WTC11 (cell line): ENCODE measurements at regions of chr17 and their contacts with region 1.

Region 1: DNA sequence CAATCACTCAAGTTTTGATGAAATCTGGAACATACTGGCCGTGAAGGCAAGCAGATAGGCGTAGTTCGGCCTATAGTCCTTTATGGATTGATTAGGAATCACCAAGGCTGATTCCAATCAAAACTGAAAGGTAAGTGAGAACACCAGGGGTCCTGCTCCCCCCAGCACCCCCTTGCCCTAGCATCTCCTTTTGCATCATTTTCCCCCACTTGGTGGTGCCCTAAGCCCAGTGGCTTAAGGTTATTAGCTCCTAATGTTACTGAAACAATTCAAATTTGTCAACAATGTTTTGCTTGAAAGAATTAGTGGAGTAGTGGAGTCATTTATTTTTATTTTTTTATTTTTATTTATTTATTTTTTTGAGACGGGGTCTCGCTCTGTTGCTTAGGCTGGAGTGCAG is 4.9 kb downstream of the SLFN14 start:
- DNase-seq: no peak
- ATAC-seq: no peak
- H3K4me3 Mint-ChIP-seq: no peak overlapping the region
- H3K27ac Mint-ChIP-seq: no peak overlapping the region
- H3K4me1 Mint-ChIP-seq: peaks cover 11% of the 10 kb centered on the region
- H3K27me3 Mint-ChIP-seq: peaks cover 19% of the 10 kb centered on the region
- CTCF ChIP-seq: no peak

Region 2: GRCh38 chr17:35359398-35359797 is 196.3 kb before region 1 on chr17:
- CTCF ChIA-PET with region 1: no interaction called
- POLR2A ChIA-PET with region 1: no interaction called
- DNase-seq: no peak
- ATAC-seq: no peak
- H3K4me3 Mint-ChIP-seq: no peak overlapping the region
- H3K27ac Mint-ChIP-seq: no peak overlapping the region
- H3K4me1 Mint-ChIP-seq: peaks cover 4% of the 10 kb centered on the region; the same call in 1 of the 2 replicates
- H3K27me3 Mint-ChIP-seq: peaks cover 54% of the 10 kb centered on the region
- CTCF ChIP-seq: no peak

Region 3: DNA sequence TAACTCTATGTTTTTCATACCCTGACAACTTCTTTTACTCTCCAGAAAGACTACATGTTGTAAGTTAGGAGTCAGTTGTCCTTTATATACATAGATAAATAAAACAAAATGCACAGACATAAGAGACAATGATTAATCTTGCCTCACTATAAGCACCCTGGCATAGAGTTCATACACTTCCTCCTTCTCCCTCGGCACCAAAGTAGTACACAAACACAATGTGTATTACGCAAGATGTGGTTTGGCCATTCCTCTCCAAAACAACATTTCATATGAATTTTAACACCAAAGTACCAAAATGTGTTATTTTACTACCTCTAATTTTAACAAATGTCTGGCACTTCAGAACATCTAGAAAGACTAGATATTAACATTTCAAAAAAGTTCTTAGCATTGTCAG is 165.0 kb before region 1 on chr17:
- CTCF ChIA-PET with region 1: no interaction called
- POLR2A ChIA-PET with region 1: no interaction called
- DNase-seq: no peak
- ATAC-seq: no peak
- H3K4me3 Mint-ChIP-seq: no peak overlapping the region
- H3K27ac Mint-ChIP-seq: no peak overlapping the region
- H3K4me1 Mint-ChIP-seq: peaks cover 17% of the 10 kb centered on the region
- H3K27me3 Mint-ChIP-seq: peaks cover 29% of the 10 kb centered on the region
- CTCF ChIP-seq: no peak

Region 4: DNA sequence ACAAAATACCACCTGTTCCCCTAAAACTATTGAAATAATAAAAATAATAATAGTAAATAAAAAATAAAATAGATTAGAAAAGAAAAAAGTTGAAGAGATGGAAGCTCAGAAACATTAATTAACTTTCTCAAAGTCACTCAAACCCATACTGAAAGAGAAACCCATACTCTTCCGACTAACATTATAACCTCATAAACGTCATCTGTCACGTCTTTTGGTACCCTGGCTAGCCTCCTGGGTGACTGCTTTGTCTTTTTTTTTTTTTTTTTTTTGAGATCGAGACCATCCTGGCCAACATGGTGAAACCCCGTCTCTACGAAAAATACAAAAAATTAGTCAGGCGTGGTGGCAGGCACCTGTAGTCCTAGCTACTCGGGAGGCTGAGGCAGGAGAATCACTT is 25.8 kb before region 1 on chr17:
- CTCF ChIA-PET with region 1: interaction called, 3 read pairs
- POLR2A ChIA-PET with region 1: interaction called, 10 read pairs
- DNase-seq: no peak
- ATAC-seq: no peak
- H3K4me3 Mint-ChIP-seq: no peak overlapping the region
- H3K27ac Mint-ChIP-seq: no peak overlapping the region
- H3K4me1 Mint-ChIP-seq: no peaks in the 10 kb centered on the region
- H3K27me3 Mint-ChIP-seq: peaks cover 36% of the 10 kb centered on the region
- CTCF ChIP-seq: no peak

Region 5: GRCh38 chr17:35621768-35622167 is 66.1 kb after region 1 on chr17:
- CTCF ChIA-PET with region 1: no interaction called
- POLR2A ChIA-PET with region 1: no interaction called
- DNase-seq: no peak
- ATAC-seq: no peak
- H3K4me3 Mint-ChIP-seq: no peak overlapping the region
- H3K27ac Mint-ChIP-seq: no peak overlapping the region
- H3K4me1 Mint-ChIP-seq: no peaks in the 10 kb centered on the region
- H3K27me3 Mint-ChIP-seq: no peaks in the 10 kb centered on the region
- CTCF ChIP-seq: no peak

Region 6: GRCh38 chr17:35660902-35661301 is 105.2 kb after region 1 on chr17:
- CTCF ChIA-PET with region 1: no interaction called
- POLR2A ChIA-PET with region 1: no interaction called
- DNase-seq: no peak
- ATAC-seq: no peak
- H3K4me3 Mint-ChIP-seq: no peak overlapping the region
- H3K27ac Mint-ChIP-seq: no peak overlapping the region
- H3K4me1 Mint-ChIP-seq: peaks cover 14% of the 10 kb centered on the region
- H3K27me3 Mint-ChIP-seq: no peaks in the 10 kb centered on the region
- CTCF ChIP-seq: no peak